Left lung (tissue), 14 donors: ENCODE measurements at regions of chr17 and their contacts with region 1.

Region 1: GRCh38 chr17:2828397-2829038 is 32.3 kb downstream of the RAP1GAP2 start:
- DNase-seq: peak; percentile 29 to 95 (median 65)
- ATAC-seq: peak; percentile 96
- H3K4me3 ChIP-seq: no peak overlapping the region
- H3K27ac ChIP-seq: no peak overlapping the region
- H3K4me1 ChIP-seq: peaks cover 0 to 20% of the 10 kb centered on the region in 2 donors
- H3K27me3 ChIP-seq: peaks cover 0 to 24% of the 10 kb centered on the region in 2 donors
- CTCF ChIP-seq: peak; percentile 86 to 88

Region 2: GRCh38 chr17:2749784-2750181 is 78.7 kb before region 1 on chr17:
- intact Hi-C with region 1: no loop called
- DNase-seq: peak; percentile 67 to 92 (median 76)
- ATAC-seq: peak; percentile 100
- H3K4me3 ChIP-seq: no peak overlapping the region
- H3K27ac ChIP-seq: no peak overlapping the region
- H3K4me1 ChIP-seq: peaks cover 0 to 6% of the 10 kb centered on the region in 2 donors
- H3K27me3 ChIP-seq: peaks cover 19 to 100% of the 10 kb centered on the region in 2 donors
- CTCF ChIP-seq: no peak

Region 3: DNA sequence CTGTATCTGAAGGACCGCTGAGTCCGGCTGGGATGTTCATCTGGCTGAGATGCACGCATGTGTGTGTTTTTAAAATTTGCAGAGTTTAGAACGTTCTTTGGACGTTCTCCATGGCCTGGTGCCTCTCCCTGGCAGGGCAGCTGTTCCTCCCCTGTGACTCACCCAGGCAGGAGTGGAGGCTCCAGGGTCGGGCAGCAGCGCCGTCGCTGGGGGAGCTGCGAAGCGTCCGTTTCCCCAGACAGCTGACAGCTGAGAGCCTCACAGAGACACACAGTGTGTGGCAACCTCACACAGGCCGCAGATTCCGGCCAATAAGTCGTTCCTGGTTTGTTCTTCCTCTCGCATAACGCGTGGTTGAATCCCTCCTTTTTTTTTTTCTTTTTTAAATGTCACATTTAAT is 154.3 kb after region 1 on chr17:
- intact Hi-C with region 1: no loop called
- DNase-seq: peak; percentile 60 to 93 (median 78)
- ATAC-seq: peak; percentile 87
- H3K4me3 ChIP-seq: no peak overlapping the region
- H3K27ac ChIP-seq: peak overlapping the region; percentile 10 to 28
- H3K4me1 ChIP-seq: no peaks in the 10 kb centered on the region
- H3K27me3 ChIP-seq: no peaks in the 10 kb centered on the region
- CTCF ChIP-seq: no peak

Region 4: DNA sequence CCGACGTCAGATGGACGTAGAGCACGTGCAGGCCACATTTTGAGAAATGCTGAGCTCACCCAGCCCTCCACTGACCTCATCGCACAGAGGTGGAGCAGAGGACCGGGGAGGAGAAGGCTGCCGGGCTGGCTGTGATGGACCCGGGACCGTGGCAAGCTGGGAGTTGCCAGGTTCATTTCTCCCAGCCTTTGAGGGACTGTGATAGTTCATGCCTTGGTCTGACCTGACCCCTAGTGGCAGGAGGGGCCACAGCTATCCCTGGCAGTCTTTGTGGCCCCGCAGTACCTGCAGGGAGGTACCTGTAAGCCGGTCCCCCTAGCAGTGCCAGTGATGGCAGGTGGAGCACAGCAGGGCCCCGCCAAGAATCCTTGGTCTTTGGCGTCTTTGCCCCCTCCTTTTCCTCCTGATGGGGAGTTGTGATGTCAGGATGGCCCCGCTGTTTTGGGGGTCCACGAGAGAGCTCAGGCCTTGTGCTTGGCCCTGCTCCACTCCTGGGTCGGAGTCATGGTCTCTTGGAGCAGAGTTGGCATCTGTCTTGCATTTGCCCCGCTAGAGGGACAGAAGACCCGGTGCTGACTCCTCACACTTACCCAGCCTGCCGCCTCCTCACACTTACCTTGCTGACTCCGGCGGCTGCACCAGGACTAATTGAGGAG is 184.5 kb after region 1 on chr17:
- intact Hi-C with region 1: loop called in 1 of 2 experiments (anchors 5 kb)
- DNase-seq: peak; percentile 52 to 79 (median 60)
- ATAC-seq: peak; percentile 96
- H3K4me3 ChIP-seq: no peak overlapping the region
- H3K27ac ChIP-seq: no peak overlapping the region
- H3K4me1 ChIP-seq: no peaks in the 10 kb centered on the region
- H3K27me3 ChIP-seq: no peaks in the 10 kb centered on the region
- CTCF ChIP-seq: peak; percentile 70 to 82